Ovary (tissue), 10 donors: ENCODE measurements at regions of chr14 and their contacts with region 1.

Region 1: GRCh38 chr14:45267071-45267470 is 14.1 kb upstream of the MIS18BP1 start:
- DNase-seq: no peak
- H3K4me3 ChIP-seq: no peak overlapping the region
- H3K27ac ChIP-seq: no peak overlapping the region
- H3K4me1 ChIP-seq: no peaks in the 10 kb centered on the region
- H3K27me3 ChIP-seq: no peaks in the 10 kb centered on the region
- CTCF ChIP-seq: no peak
- EP300 ChIP-seq: no peak
- POLR2A ChIP-seq: no peak

Region 2: DNA sequence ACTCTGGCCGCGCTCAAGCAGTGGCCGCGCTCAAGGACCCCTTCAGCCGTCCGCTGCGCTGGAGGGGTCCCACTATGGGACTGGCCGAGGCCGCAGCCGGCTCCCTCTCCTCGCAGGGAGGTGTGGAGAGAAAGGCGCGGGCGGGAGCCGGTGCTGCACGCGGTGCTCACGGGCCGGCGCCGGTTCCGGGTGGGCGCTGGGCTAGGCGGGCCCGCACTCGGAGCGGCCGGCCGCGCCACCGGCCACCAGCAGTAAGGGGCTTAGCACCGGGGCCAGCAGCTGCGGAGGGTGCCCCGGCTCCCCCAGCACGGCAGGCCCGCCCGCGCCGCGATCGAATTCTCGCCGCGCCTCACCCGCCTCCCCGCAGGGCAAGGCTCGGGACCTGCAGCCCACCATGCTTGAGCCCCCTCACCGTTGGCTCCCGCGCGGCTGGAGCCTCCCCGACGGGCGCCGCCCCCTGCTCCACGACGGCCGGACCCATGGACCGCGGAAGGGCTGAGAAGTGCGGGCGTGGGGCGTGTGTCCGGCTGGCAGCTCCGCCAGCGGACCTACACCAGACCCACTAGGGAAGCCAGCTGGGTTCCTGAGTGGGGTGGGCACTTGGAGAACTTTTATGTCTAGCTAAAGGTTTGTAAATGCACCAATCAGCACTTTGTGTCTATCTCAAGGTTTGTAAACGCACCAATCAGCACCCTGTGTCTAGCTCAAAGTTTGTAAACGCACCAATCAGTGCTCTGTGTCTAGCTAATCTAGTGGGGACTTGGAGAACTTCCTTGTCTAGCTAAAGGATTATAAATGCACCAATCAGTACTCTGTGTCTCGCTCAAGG is 354.8 kb before region 1 on chr14:
- intact Hi-C with region 1: loop called in 1 of 4 experiments (anchors 5 kb)
- DNase-seq: peak in 3 of 5 donors; percentile 20 to 41 (median 27)
- H3K4me3 ChIP-seq: peak overlapping the region; percentile 43
- H3K27ac ChIP-seq: no peak overlapping the region
- H3K4me1 ChIP-seq: peaks cover 3% of the 10 kb centered on the region
- H3K27me3 ChIP-seq: no peaks in the 10 kb centered on the region
- CTCF ChIP-seq: no peak
- EP300 ChIP-seq: no peak
- POLR2A ChIP-seq: no peak

Region 3: GRCh38 chr14:45308745-45309397 is 41.8 kb after region 1 on chr14:
- intact Hi-C with region 1: no loop called
- DNase-seq: no peak
- H3K4me3 ChIP-seq: no peak overlapping the region
- H3K27ac ChIP-seq: no peak overlapping the region
- H3K4me1 ChIP-seq: no peaks in the 10 kb centered on the region
- H3K27me3 ChIP-seq: no peaks in the 10 kb centered on the region
- CTCF ChIP-seq: no peak
- EP300 ChIP-seq: no peak
- POLR2A ChIP-seq: no peak

Region 4: GRCh38 chr14:45467023-45467422 is 200.0 kb after region 1 on chr14:
- intact Hi-C with region 1: no loop called
- DNase-seq: no peak
- H3K4me3 ChIP-seq: no peak overlapping the region
- H3K27ac ChIP-seq: no peak overlapping the region
- H3K4me1 ChIP-seq: no peaks in the 10 kb centered on the region
- H3K27me3 ChIP-seq: no peaks in the 10 kb centered on the region
- CTCF ChIP-seq: no peak
- EP300 ChIP-seq: no peak
- POLR2A ChIP-seq: no peak